CD14-positive monocyte (primary cell): ENCODE measurements at regions of chr10 and their contacts with region 1.

Region 1: GRCh38 chr10:63256009-63256773 is 123.1 kb downstream of the NRBF2 start:
- DNase-seq: peak; percentile 75 to 92 (median 79)
- H3K4me3 ChIP-seq: peak overlapping the region; percentile 9 to 99 (median 40)
- H3K4me3 Mint-ChIP-seq: peak overlapping the region; percentile 62 to 74
- H3K27ac ChIP-seq: peak overlapping the region; percentile 38 to 75
- H3K27ac Mint-ChIP-seq: peak overlapping the region; percentile 82 to 94 (median 91)
- H3K4me1 ChIP-seq: peaks cover 76 to 93% of the 10 kb centered on the region in 2 donors
- H3K4me1 Mint-ChIP-seq: peaks cover 89% of the 10 kb centered on the region
- H3K27me3 ChIP-seq: no peaks in the 10 kb centered on the region
- H3K27me3 Mint-ChIP-seq: no peaks in the 10 kb centered on the region
- CTCF ChIP-seq: no peak

Region 2: GRCh38 chr10:63221950-63222349 is 34.2 kb before region 1 on chr10:
- intact Hi-C with region 1: loop called (anchors 5 kb)
- DNase-seq: no peak
- H3K4me3 ChIP-seq: no peak overlapping the region
- H3K4me3 Mint-ChIP-seq: no peak overlapping the region
- H3K27ac ChIP-seq: no peak overlapping the region
- H3K27ac Mint-ChIP-seq: no peak overlapping the region
- H3K4me1 ChIP-seq: peaks cover 12 to 27% of the 10 kb centered on the region in 2 donors
- H3K4me1 Mint-ChIP-seq: peaks cover 42% of the 10 kb centered on the region
- H3K27me3 ChIP-seq: no peaks in the 10 kb centered on the region
- H3K27me3 Mint-ChIP-seq: peaks cover 0 to 3% (median 1%) of the 10 kb centered on the region in 3 donors
- CTCF ChIP-seq: no peak

Region 3: DNA sequence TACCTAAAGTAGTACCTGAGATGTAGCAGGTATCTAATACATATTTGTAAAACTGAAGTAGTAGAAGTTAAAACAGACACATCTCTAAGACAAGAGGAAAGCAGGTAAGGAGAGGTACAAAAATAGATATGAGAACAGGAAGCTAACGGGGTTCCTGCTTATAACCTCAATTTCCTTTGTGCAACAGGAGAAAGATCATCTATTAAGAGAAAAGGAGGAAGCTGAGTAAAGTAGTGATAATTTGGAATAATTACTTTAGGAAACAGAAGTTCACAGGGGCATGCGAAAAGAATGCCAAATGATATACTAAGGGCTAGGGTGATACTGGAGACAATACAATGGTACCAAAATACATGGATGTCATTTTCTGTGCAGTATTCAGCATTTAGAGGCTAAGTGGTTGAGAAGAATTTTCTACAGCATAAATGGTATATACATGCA is 14.3 kb before region 1 on chr10:
- intact Hi-C with region 1: no loop called
- DNase-seq: peak in 1 of 3 donors; percentile 36
- H3K4me3 ChIP-seq: peak overlapping the region in 1 of 3 experiments; percentile 13
- H3K4me3 Mint-ChIP-seq: peak overlapping the region in 1 of 2 donors; percentile 30
- H3K27ac ChIP-seq: no peak overlapping the region
- H3K27ac Mint-ChIP-seq: peak overlapping the region in 3 of 7 donors; percentile 9 to 30 (median 14)
- H3K4me1 ChIP-seq: peaks cover 45 to 67% of the 10 kb centered on the region in 2 donors
- H3K4me1 Mint-ChIP-seq: peaks cover 79% of the 10 kb centered on the region
- H3K27me3 ChIP-seq: no peaks in the 10 kb centered on the region
- H3K27me3 Mint-ChIP-seq: no peaks in the 10 kb centered on the region
- CTCF ChIP-seq: no peak